ENCODE measurements at regions of chr7 and their contacts with region 1.

Region 1: GRCh38 chr7:99918959-99919813 is at the start of gene TRIM4:
- DNase-seq: peak; percentile 78 to 95 (median 86)
- ATAC-seq: peak; percentile 97
- H3K4me3 ChIP-seq: peak within 1 kb of the TSS; percentile 80
- H3K4me3 Mint-ChIP-seq: peak within 1 kb of the TSS; percentile 97
- H3K27ac ChIP-seq: peak within 1 kb of the TSS; percentile 78 to 80
- H3K27ac Mint-ChIP-seq: peak within 1 kb of the TSS; percentile 98
- H3K4me1 ChIP-seq: peaks cover 39% of the 10 kb centered on the region
- H3K4me1 Mint-ChIP-seq: peaks cover 61% of the 10 kb centered on the region
- H3K27me3 ChIP-seq: no peaks in the 10 kb centered on the region
- H3K27me3 Mint-ChIP-seq: no peaks in the 10 kb centered on the region
- CTCF ChIP-seq: peak; percentile 13
- total RNA-seq, gene TRIM4: 22.8 to 23.1 TPM

Region 2: DNA sequence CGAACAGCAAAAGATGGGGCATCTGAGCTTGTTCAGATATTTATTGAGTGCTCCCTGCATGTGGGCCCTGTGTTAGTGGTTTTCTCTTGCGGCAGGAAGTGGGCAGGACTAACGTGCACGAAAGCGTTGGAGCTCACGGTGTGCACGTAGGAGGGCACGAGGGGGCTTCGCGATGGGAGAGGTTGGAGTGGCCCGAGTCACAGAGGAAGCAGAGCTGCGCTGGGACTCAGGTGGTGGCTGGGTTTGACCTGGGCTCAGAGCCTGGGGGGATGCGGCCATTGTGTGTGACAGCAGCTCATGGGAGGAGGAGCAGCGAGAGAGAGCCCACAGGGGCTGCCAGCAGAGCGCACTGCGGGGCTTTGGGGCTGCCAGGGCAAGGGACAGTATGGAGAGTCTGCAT is 294.7 kb before region 1 on chr7:
- CTCF ChIA-PET with region 1: no interaction called
- POLR2A ChIA-PET with region 1: interaction called, 10 read pairs
- intact Hi-C with region 1: no loop called
- DNase-seq: peak; percentile 48 to 91 (median 63)
- ATAC-seq: peak; percentile 96
- H3K4me3 ChIP-seq: peak overlapping the region; percentile 46
- H3K4me3 Mint-ChIP-seq: peak overlapping the region; percentile 85
- H3K27ac ChIP-seq: peak overlapping the region; percentile 66 to 67
- H3K27ac Mint-ChIP-seq: peak overlapping the region; percentile 92
- H3K4me1 ChIP-seq: peaks cover 39% of the 10 kb centered on the region
- H3K4me1 Mint-ChIP-seq: peaks cover 49% of the 10 kb centered on the region
- H3K27me3 ChIP-seq: no peaks in the 10 kb centered on the region
- H3K27me3 Mint-ChIP-seq: no peaks in the 10 kb centered on the region
- CTCF ChIP-seq: no peak

Region 3: DNA sequence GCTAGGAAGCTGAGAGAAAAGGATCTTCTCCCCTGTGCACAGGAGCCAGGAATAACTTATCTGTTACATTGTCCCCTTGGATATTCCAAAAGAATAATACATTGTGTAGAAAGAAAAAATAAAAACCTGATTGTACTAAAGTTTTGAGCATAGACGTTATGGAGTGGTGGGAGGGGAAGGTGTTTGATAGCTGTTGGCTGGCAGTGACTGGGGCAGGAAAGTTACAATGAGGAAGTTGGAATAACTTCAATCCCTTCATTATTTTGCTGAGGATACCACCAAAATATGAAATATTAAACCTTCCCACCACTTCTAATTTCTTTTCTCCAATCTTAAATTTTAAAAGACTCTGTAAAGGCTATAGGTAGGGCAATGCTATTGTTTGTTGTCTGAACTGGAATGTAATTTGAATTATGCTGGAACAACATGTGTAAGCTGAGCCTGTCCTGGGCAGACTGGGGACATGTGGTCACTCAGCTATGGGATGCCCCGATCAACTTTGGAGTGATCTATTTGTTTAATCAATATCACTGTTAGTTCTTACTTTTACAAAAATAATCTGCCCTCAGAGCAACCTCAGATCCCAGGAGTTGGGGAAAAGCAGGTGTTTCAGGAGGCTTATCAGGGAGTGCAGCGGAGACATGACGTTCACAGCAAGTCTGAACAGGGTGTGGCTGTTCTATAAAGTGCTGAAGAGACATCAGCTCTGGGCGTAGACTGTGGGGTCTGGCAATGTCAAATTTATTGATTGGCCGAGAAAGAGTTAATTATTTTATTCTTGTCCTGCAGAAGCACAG is 70.6 kb before region 1 on chr7:
- CTCF ChIA-PET with region 1: no interaction called
- POLR2A ChIA-PET with region 1: no interaction called
- intact Hi-C with region 1: no loop called
- DNase-seq: no peak
- ATAC-seq: no peak
- H3K4me3 ChIP-seq: no peak overlapping the region
- H3K4me3 Mint-ChIP-seq: no peak overlapping the region
- H3K27ac ChIP-seq: no peak overlapping the region
- H3K27ac Mint-ChIP-seq: no peak overlapping the region
- H3K4me1 ChIP-seq: no peaks in the 10 kb centered on the region
- H3K4me1 Mint-ChIP-seq: no peaks in the 10 kb centered on the region
- H3K27me3 ChIP-seq: peaks cover 0 to 1% of the 10 kb centered on the region in 2 experiments
- H3K27me3 Mint-ChIP-seq: peaks cover 20% of the 10 kb centered on the region
- CTCF ChIP-seq: no peak

Region 4: GRCh38 chr7:99997545-99998137 is 78.5 kb after region 1 on chr7:
- CTCF ChIA-PET with region 1: no interaction called
- POLR2A ChIA-PET with region 1: interaction called, 13 read pairs
- intact Hi-C with region 1: no loop called
- DNase-seq: peak; percentile 49 to 89 (median 68)
- ATAC-seq: peak; percentile 91
- H3K4me3 ChIP-seq: peak overlapping the region; percentile 48
- H3K4me3 Mint-ChIP-seq: peak overlapping the region; percentile 82
- H3K27ac ChIP-seq: peak overlapping the region; percentile 42 to 66
- H3K27ac Mint-ChIP-seq: peak overlapping the region; percentile 90
- H3K4me1 ChIP-seq: peaks cover 21% of the 10 kb centered on the region
- H3K4me1 Mint-ChIP-seq: peaks cover 22% of the 10 kb centered on the region
- H3K27me3 ChIP-seq: no peaks in the 10 kb centered on the region
- H3K27me3 Mint-ChIP-seq: no peaks in the 10 kb centered on the region
- CTCF ChIP-seq: no peak

Region 5: DNA sequence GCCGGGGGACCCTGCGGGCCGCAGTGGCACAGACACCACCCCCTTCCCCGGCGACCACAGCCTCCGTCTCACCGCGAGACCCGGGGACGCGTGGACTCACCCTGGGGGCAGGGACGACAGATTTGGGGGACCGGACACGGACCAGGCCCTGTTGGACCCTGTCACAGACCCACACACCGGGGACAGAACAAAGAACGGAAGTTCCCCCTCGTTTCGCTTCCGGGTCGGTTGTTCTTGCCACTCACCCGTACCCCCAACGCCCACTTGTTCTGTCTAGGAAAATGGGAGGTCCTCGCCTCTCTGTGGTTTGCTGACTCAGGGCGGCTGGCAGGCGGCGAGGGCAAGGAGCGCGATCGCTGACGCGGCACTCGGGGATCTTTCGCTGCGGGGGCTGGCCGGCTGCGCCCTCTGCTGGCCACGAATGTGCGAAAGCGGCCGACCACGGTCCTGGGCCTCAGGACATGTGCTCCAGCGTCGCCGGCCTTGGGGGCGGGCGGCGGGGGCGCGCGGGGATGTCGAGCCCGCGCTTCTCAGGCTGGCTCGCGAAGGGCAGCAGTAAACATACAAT is 162.4 kb after region 1 on chr7 and contains the start of gene ZNF3:
- CTCF ChIA-PET with region 1: interaction called, 3 read pairs
- POLR2A ChIA-PET with region 1: interaction called, 5 read pairs
- intact Hi-C with region 1: loop called (anchors 5 to 10 kb)
- DNase-seq: peak; percentile 92 to 99 (median 96)
- ATAC-seq: peak; percentile 85
- H3K4me3 ChIP-seq: peak within 1 kb of the TSS; percentile 84
- H3K4me3 Mint-ChIP-seq: peak within 1 kb of the TSS; percentile 90
- H3K27ac ChIP-seq: peak within 1 kb of the TSS; percentile 75 to 80
- H3K27ac Mint-ChIP-seq: peak within 1 kb of the TSS; percentile 83
- H3K4me1 ChIP-seq: peaks cover 36% of the 10 kb centered on the region
- H3K4me1 Mint-ChIP-seq: peaks cover 39% of the 10 kb centered on the region
- H3K27me3 ChIP-seq: no peaks in the 10 kb centered on the region
- H3K27me3 Mint-ChIP-seq: no peaks in the 10 kb centered on the region
- CTCF ChIP-seq: peak; percentile 96
- total RNA-seq, gene ZNF3: 38.3 to 40.3 TPM

Region 6: DNA sequence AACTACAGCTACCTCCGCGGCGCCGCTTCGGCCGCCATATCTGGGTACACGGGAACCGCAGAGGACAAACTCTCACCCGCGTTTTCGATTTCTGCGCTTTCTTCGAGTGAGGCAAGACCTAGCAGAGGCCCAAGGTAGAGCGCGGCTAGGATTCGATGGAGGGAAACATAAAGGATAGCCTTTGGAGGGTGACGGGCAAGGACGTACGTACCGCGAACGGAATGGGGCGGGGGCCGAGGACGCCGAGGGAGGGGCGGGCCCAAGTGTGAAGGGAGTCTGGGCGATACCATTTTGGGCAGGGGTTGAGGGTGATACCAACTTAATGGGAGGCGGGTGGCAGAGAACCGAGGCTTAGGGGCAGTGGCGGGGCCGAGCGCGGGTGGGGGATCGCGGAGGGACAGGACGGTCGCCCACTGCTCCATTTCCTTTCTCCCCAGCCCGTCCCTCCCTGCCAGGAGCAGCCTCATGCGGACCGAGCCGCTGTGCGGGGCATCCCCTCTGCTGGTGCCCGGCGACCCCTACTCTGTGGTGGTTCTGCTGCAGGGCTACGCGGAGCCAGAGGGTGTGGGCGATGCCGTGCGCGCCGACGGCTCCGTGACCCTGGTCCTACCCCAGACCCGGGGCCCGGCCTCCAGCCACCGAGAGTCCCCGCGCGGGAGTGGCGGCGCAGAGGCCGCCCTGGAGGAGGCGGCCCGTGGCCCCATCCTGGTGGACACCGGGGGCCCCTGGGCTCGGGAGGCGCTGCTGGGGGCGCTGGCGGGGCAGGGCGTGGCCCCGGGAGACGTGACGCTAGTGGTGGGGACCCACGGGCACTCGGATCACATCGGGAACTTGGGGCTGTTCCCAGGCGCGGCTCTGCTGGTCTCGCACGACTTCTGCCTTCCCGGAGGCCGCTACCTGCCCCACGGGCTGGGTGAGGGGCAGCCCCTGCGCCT is 208.0 kb after region 1 on chr7 and contains the start of gene MBLAC1:
- CTCF ChIA-PET with region 1: no interaction called
- POLR2A ChIA-PET with region 1: interaction called, 10 read pairs
- intact Hi-C with region 1: no loop called
- DNase-seq: peak; percentile 87 to 97 (median 91)
- ATAC-seq: peak; percentile 80
- H3K4me3 ChIP-seq: peak within 1 kb of the TSS; percentile 96
- H3K4me3 Mint-ChIP-seq: peak within 1 kb of the TSS; percentile 100
- H3K27ac ChIP-seq: peak within 1 kb of the TSS; percentile 96 to 99
- H3K27ac Mint-ChIP-seq: peak within 1 kb of the TSS; percentile 100
- H3K4me1 ChIP-seq: peaks cover 39% of the 10 kb centered on the region
- H3K4me1 Mint-ChIP-seq: peaks cover 31% of the 10 kb centered on the region
- H3K27me3 ChIP-seq: no peaks in the 10 kb centered on the region
- H3K27me3 Mint-ChIP-seq: no peaks in the 10 kb centered on the region
- CTCF ChIP-seq: no peak
- total RNA-seq, gene MBLAC1: 3.7 to 4.4 TPM

Region 7: DNA sequence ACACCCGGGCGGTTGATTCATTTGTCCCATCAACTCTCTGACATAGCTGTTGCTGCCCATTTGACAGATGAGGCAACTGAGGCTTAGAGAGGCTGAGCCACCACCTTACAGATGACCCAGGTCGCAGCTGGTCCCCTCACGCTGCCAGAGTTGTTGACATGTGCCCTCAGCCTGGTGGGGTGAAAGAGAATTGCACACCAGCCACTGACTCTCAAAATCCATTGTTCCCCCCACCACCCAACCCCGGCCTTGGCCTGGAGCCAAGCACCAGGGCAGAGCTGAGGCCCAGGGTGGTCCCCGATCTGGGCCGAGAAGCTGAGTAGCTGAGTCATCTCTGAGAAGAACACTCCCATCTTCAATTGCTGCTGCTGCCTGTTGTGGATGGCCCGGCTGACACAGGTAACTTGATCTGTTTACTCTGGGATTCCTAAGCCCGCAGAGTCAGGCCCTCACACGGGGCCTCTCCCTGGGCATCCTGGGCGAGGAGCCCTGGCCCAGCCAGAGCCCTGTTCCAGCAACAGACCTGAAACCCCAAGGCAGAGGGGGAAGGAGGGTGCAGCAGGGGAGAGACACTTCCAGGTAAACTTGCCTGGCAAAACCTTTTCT is 328.1 kb after region 1 on chr7:
- CTCF ChIA-PET with region 1: no interaction called
- POLR2A ChIA-PET with region 1: no interaction called
- intact Hi-C with region 1: no loop called
- DNase-seq: no peak
- ATAC-seq: no peak
- H3K4me3 ChIP-seq: no peak overlapping the region
- H3K4me3 Mint-ChIP-seq: no peak overlapping the region
- H3K27ac ChIP-seq: no peak overlapping the region
- H3K27ac Mint-ChIP-seq: no peak overlapping the region
- H3K4me1 ChIP-seq: peaks cover 8% of the 10 kb centered on the region
- H3K4me1 Mint-ChIP-seq: peaks cover 5% of the 10 kb centered on the region
- H3K27me3 ChIP-seq: no peaks in the 10 kb centered on the region
- H3K27me3 Mint-ChIP-seq: no peaks in the 10 kb centered on the region
- CTCF ChIP-seq: no peak